ENCODE measurements at regions of chr17 and their contacts with region 1.

Region 1: DNA sequence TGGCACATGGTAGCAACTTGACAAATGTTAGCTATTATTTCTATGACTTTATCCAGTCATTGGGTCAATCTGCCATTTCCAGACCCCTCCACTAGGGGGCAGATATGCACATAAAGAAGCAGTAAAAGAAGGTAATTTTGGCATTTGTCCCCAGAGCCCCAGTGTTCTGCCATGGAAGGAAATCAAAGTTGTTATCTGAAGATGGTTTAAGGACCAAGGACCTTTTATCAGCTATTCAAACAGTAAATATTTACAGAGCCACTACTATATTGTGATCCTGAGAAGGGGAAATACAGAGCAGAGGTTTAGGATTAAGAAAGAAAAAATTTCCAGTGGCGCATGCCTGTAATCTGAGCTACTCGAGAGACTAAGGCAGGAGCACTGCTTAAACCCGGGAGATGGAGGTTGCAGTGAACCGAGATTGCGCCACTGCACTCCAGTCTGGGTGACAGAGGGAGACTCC is 20.0 kb downstream of the TRAF4 start:
- DNase-seq: peak; percentile 58 to 84 (median 76)
- ATAC-seq: peak; percentile 95
- H3K4me3 ChIP-seq: no peak overlapping the region
- H3K4me3 Mint-ChIP-seq: no peak overlapping the region
- H3K27ac ChIP-seq: no peak overlapping the region
- H3K27ac Mint-ChIP-seq: no peak overlapping the region
- H3K4me1 ChIP-seq: no peaks in the 10 kb centered on the region
- H3K4me1 Mint-ChIP-seq: peaks cover 6% of the 10 kb centered on the region
- H3K27me3 ChIP-seq: no peaks in the 10 kb centered on the region
- H3K27me3 Mint-ChIP-seq: no peaks in the 10 kb centered on the region
- CTCF ChIP-seq: peak; percentile 92

Region 2: DNA sequence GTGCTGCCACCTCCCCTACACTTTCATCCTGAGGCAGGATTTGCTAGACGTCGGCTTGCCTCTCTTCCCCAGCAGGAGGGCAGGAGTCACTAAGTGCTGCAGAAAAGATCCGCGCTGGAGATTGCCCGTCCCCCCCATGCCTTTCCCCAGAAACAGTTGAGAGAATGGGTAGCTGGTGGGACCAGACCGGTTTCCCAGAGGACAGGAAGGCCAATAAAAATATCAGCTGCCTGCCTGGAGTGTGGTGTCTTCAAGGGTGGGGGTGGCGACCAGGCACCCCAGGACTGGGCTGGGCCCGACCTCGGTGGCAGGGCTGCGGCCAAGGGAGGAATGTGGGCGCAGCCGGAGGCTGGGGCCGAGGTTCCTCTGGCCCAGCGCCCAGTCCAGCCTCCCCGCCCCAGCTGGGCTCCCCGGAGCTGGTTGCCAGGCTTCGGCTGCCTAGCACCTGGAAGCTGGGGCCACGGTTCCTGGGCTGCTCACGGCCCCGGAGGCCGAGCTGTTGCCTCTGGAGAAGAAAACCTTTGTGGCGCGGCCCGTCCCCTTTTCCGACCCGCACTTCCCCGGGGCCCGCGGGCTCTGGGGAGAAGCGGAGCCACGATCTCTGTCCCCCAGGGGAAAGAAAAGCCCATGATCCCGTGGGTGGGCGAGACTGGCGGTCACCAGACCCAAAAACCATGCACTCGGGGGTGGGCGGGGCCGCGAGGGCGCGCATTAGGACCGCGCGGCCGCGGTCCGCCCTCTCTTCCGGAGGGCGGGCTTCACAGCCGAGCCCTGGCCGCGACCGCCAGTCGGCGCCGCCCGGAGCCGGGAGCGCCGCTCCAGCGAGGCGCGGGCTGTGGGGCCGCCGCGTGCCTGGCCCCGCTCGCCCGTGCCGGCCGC is 20.4 kb before region 1 on chr17 and contains the start of gene TRAF4:
- CTCF ChIA-PET with region 1: interaction called, 66 read pairs
- POLR2A ChIA-PET with region 1: interaction called, 3 read pairs
- intact Hi-C with region 1: no loop called
- DNase-seq: peak; percentile 44 to 91 (median 74)
- ATAC-seq: peak; percentile 87
- H3K4me3 ChIP-seq: peak within 1 kb of the TSS; percentile 69 to 72
- H3K4me3 Mint-ChIP-seq: peak within 1 kb of the TSS; percentile 88
- H3K27ac ChIP-seq: peak within 1 kb of the TSS; percentile 62 to 82
- H3K27ac Mint-ChIP-seq: peak within 1 kb of the TSS; percentile 84
- H3K4me1 ChIP-seq: peaks cover 33% of the 10 kb centered on the region
- H3K4me1 Mint-ChIP-seq: peaks cover 28% of the 10 kb centered on the region
- H3K27me3 ChIP-seq: no peaks in the 10 kb centered on the region
- H3K27me3 Mint-ChIP-seq: no peaks in the 10 kb centered on the region
- CTCF ChIP-seq: no peak
- total RNA-seq, gene TRAF4: 418 to 439 TPM

Region 3: DNA sequence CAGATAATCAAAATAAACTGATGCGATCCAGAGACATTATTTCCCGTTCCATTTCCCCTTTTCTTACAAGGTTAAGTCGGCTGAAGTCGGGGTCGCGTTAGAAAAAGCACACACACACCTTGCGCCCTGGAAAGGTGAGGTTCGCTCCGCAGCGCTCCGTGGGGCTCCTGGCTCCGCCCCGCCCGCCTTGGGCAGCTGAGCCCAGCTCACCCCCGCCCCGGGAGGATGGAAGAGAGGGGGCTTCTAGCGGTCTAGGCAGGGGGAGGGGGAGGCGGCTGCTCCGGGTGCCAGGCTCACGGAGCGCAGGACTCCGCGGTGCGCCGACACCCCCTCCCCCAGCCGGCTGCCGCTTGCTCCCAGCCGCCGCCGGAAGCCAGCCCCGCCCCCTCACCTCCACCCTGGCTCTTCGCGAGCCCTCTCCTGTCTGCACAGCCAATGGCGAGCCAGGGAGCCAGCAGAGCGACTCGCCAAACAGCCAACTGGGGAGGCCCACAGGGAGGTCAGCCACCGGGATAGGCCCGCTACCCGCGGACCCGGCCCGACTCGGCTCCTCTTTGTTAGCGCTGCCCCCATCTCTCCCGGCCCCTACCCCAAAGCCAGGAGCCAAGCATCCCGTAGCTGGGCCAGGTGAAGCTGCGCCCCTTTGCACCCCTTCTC is 48.4 kb after region 1 on chr17:
- CTCF ChIA-PET with region 1: interaction called, 43 read pairs
- POLR2A ChIA-PET with region 1: no interaction called
- intact Hi-C with region 1: loop called (anchors 5 kb)
- DNase-seq: peak; percentile 90 to 98 (median 96)
- ATAC-seq: peak; percentile 96
- H3K4me3 ChIP-seq: peak overlapping the region; percentile 67 to 99
- H3K4me3 Mint-ChIP-seq: peak overlapping the region; percentile 94
- H3K27ac ChIP-seq: peak overlapping the region; percentile 93 to 96
- H3K27ac Mint-ChIP-seq: peak overlapping the region; percentile 93
- H3K4me1 ChIP-seq: peaks cover 18% of the 10 kb centered on the region
- H3K4me1 Mint-ChIP-seq: peaks cover 35% of the 10 kb centered on the region
- H3K27me3 ChIP-seq: no peaks in the 10 kb centered on the region
- H3K27me3 Mint-ChIP-seq: no peaks in the 10 kb centered on the region
- CTCF ChIP-seq: no peak

Region 4: DNA sequence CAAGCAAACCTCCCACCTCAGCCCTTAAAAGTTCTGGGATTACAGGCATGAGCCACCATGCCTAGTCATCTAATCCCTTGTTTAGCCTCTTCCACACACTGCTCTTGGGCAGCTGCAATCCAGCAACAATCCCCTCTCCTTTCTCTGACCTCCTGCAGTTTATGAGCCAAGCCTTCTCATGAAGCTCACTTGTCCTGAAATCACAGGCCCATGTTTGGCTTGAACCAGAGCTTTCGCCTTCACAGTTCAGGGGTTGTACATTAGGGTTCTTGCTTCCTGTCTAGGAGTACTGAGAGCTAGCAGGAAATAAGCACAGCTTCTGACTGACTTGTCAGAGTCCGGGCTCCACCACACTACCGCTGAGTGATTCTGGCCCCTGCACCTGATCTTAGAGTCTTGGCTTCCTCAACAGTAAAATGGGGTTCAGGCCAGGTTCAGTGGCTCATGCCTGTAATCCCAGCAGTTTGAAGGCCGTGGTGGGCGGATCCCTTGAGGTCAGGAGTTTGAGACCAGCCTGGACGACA is 107.3 kb after region 1 on chr17:
- CTCF ChIA-PET with region 1: interaction called, 12 read pairs
- POLR2A ChIA-PET with region 1: no interaction called
- intact Hi-C with region 1: no loop called
- DNase-seq: peak in 8 of 9 experiments; percentile 21 to 71 (median 44)
- ATAC-seq: peak; percentile 97
- H3K4me3 ChIP-seq: no peak overlapping the region
- H3K4me3 Mint-ChIP-seq: peak overlapping the region; percentile 42
- H3K27ac ChIP-seq: peak overlapping the region; percentile 42 to 73
- H3K27ac Mint-ChIP-seq: peak overlapping the region; percentile 96
- H3K4me1 ChIP-seq: peaks cover 14% of the 10 kb centered on the region
- H3K4me1 Mint-ChIP-seq: peaks cover 14% of the 10 kb centered on the region
- H3K27me3 ChIP-seq: no peaks in the 10 kb centered on the region
- H3K27me3 Mint-ChIP-seq: no peaks in the 10 kb centered on the region
- CTCF ChIP-seq: no peak

Region 5: DNA sequence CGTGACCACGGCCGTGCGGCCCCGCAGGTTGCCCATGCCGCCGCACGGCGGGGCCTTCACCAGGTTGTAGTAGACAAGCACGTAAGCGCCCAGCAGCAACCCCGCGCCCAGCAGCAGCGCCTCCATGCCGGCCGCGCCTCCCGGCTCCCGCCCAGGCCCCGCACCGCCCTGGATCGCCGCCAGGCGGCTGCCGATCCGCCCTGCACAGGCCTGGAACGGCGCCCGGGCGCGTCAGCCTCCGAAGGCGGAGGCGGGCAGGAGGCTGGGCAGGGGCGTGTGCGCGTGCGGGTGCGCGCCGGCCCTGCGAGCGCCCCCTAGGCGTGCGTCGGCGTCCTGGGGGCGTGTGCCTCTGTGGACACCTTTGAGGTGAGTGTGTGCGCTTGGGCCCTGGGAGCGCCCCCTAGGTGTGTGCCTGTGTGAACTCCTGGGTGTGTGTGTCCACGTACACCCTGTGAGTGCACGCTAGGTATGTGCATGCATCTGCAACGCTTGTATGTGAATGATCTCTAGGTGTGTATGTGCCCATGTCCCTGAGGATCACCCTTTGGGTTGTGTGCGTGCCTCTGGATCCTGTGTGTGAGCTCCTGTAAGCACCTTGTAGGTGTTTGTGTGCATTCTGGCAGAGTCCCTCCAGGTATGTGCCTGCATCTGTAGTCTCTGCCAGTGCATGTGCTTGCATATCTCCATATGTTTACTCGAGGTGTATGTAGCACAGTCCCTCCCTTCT is 139.1 kb after region 1 on chr17 and contains the start of gene DHRS13:
- CTCF ChIA-PET with region 1: interaction called, 95 read pairs
- POLR2A ChIA-PET with region 1: interaction called, 4 read pairs
- intact Hi-C with region 1: loop called (anchors 1 to 5 kb)
- DNase-seq: peak; percentile 87 to 98 (median 95)
- ATAC-seq: peak; percentile 93
- H3K4me3 ChIP-seq: peak within 1 kb of the TSS; percentile 71 to 72
- H3K4me3 Mint-ChIP-seq: peak within 1 kb of the TSS; percentile 93
- H3K27ac ChIP-seq: peak within 1 kb of the TSS; percentile 61 to 62
- H3K27ac Mint-ChIP-seq: peak within 1 kb of the TSS; percentile 90
- H3K4me1 ChIP-seq: peaks cover 31% of the 10 kb centered on the region
- H3K4me1 Mint-ChIP-seq: peaks cover 33% of the 10 kb centered on the region
- H3K27me3 ChIP-seq: no peaks in the 10 kb centered on the region
- H3K27me3 Mint-ChIP-seq: no peaks in the 10 kb centered on the region
- CTCF ChIP-seq: peak; percentile 100
- total RNA-seq, gene DHRS13: 27.3 to 30.9 TPM

Region 6: DNA sequence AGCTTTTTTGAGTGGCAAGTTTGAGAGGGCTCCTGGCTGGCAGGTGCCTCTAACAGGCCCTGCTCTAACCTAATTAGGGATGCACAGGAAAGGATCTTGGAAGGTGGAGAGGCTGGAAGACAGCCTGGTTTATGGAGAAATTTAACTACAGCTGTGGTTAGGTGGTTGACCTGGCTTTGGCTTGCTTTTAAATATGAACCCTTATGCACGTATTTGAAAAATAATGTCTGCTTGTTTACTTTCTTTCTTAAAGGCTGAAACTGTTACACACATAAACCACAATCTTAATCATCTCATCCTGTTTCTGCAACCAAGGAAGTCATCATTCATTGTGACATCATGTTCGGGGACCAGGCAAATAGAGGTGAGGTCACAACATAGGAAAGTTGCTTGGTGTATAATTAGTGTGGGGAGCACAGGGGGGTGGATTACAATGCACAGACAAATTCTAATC is 162.1 kb after region 1 on chr17:
- CTCF ChIA-PET with region 1: interaction called, 89 read pairs
- POLR2A ChIA-PET with region 1: no interaction called
- intact Hi-C with region 1: no loop called
- DNase-seq: peak; percentile 31 to 96 (median 58)
- ATAC-seq: peak; percentile 90
- H3K4me3 ChIP-seq: no peak overlapping the region
- H3K4me3 Mint-ChIP-seq: peak overlapping the region; percentile 32
- H3K27ac ChIP-seq: peak overlapping the region; percentile 87 to 96
- H3K27ac Mint-ChIP-seq: peak overlapping the region; percentile 97
- H3K4me1 ChIP-seq: peaks cover 35% of the 10 kb centered on the region
- H3K4me1 Mint-ChIP-seq: peaks cover 60% of the 10 kb centered on the region
- H3K27me3 ChIP-seq: no peaks in the 10 kb centered on the region
- H3K27me3 Mint-ChIP-seq: no peaks in the 10 kb centered on the region
- CTCF ChIP-seq: no peak

Region 7: DNA sequence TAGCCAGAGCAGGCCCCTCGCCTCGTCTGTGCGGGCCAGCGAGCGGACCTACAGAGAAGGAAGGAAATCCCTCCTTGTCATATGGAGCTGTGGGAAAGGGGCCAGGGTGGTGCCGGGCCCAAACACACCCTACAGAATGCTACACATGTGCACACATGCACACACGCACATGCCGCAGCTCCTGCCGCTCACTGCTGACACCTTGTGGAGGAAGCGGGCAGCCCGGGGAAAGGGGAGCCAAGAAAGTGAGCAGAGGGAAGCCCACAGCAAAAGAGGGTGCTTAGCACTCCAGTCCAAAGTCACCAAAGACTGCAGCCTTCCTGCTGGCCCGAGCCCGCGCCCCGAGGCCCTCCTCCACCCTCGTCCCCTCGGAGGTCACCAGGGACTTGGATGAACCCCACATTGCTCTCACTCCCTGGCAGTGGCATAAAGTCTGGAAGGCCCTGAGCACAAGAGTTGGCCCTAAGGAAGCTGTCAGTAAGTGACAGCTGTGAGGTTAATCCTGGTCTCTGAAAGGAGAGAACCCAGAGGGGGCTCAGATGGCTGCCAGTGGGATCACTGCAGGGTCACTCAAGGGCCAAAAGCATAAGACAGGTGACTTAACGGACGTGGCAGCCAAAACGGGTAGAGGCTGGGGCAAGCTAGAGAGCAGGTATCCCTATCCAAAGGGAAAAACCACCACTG is 348.1 kb after region 1 on chr17:
- CTCF ChIA-PET with region 1: no interaction called
- POLR2A ChIA-PET with region 1: interaction called, 4 read pairs
- intact Hi-C with region 1: loop called (anchors 1 to 10 kb)
- DNase-seq: peak; percentile 49 to 79 (median 64)
- ATAC-seq: peak; percentile 88
- H3K4me3 ChIP-seq: no peak overlapping the region
- H3K4me3 Mint-ChIP-seq: no peak overlapping the region
- H3K27ac ChIP-seq: no peak overlapping the region
- H3K27ac Mint-ChIP-seq: no peak overlapping the region
- H3K4me1 ChIP-seq: peaks cover 3% of the 10 kb centered on the region
- H3K4me1 Mint-ChIP-seq: no peaks in the 10 kb centered on the region
- H3K27me3 ChIP-seq: no peaks in the 10 kb centered on the region
- H3K27me3 Mint-ChIP-seq: no peaks in the 10 kb centered on the region
- CTCF ChIP-seq: peak; percentile 57

Measured in CD8-positive, alpha-beta T cell (primary cell).